Activated CD4-positive, alpha-beta memory T cell treated with anti-CD3 and anti-CD28 coated beads for 36 hours (primary cell): ENCODE measurements at regions of chr2 and their contacts with region 1.

Region 1: DNA sequence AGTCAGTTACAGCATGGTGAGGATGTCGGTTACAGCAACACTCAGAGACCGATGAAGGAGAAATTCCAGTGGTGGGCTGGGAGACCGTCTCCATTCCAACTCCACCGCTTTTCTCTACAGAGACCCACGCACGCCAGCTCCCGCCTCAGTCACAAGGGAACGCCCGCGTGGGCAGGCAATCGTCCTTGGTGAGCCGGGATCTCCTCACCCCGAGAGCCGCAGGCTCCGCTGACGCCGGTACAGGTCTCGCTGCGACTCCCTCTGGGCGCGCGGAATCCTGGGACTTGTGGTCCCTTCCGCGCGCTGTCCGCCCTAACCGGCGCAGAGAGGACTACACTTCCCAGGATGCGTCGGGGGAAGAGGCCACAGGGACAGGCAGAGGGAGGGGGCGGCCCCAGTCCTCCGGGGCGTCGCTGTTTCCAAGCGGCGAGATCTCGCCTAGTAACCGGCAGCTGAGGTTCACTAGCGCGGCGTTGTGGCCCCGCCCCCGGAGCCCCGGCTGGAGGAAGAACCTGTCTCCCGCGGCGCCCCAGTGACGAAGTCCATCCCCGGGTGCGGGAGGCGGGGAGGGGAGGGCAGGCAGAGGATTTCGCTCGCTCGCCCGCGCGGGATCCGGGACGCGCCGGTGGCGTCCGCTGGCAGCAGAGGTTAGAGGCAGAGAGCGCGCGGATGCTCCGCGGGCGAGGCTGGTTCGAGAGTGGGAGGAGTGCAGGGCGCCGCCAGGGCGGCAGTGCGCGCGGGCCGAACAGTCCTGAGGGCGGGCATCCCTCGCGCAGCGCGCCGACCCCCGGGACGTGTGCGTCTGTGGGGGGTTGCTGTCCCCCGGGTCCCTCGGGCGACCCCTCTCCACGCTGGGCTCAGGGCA is at the start of gene EML6:
- DNase-seq: peak; percentile 99
- H3K4me3 Mint-ChIP-seq: peak within 1 kb of the TSS; percentile 85
- H3K27ac Mint-ChIP-seq: peak within 1 kb of the TSS; percentile 34
- H3K4me1 Mint-ChIP-seq: peaks cover 12% of the 10 kb centered on the region
- H3K27me3 Mint-ChIP-seq: peaks cover 31% of the 10 kb centered on the region
- total RNA-seq, gene EML6: 0.46 to 0.50 TPM

Region 2: GRCh38 chr2:53767405-53768241 is 955.7 kb before region 1 on chr2 and contains the start of gene CHAC2:
- CTCF ChIA-PET with region 1: no interaction called
- POLR2A ChIA-PET with region 1: no interaction called
- intact Hi-C with region 1: loop called (anchors 10 kb)
- DNase-seq: peak; percentile 91
- H3K4me3 Mint-ChIP-seq: peak within 1 kb of the TSS; percentile 93
- H3K27ac Mint-ChIP-seq: peak within 1 kb of the TSS; percentile 97
- H3K4me1 Mint-ChIP-seq: peaks cover 27% of the 10 kb centered on the region
- H3K27me3 Mint-ChIP-seq: no peaks in the 10 kb centered on the region
- total RNA-seq, gene CHAC2: 13.2 to 15.0 TPM

Region 3: DNA sequence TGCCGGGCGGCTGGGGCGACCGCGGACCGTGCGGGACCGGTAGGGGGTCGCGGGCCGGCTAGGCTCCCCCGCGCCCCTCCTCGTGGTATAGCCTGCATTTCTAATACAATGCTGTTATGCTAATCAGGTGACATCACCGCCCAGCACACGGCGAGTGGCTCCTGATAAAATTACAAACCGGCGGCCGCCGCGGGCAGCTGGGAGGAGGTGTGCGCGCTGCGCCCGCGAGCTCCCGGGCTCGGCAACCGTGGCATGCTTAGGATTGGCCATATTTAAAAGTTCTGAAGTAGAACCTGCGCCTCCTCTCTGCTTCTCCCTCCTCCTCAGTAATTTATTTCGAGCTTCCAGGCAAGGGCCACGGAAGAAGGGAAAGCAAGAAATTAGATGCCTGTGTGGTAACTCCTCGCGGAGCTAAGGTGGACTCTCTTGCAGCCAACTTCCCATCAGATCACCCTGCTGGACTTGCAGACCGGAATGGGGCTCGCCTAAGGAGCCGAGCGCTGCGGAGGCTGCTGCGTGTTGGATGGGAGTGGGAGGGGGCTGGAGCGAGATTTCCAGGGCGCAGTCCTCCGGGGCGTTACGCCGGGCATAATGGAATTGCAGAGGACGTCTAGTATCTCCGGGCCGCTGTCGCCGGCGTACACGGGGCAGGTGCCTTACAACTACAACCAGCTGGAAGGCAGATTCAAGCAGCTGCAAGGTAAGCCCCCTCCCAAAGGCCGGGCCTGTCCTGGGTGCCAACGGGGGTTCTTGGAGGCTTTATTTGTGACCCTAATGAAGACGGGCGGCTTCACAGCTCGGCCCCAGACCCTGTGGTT is 165.0 kb before region 1 on chr2:
- CTCF ChIA-PET with region 1: no interaction called
- POLR2A ChIA-PET with region 1: interaction called, 4 read pairs
- intact Hi-C with region 1: loop called (anchors 1 kb)
- DNase-seq: peak; percentile 85
- H3K4me3 Mint-ChIP-seq: peak overlapping the region; percentile 83
- H3K27ac Mint-ChIP-seq: peak overlapping the region; percentile 89
- H3K4me1 Mint-ChIP-seq: peaks cover 42% of the 10 kb centered on the region
- H3K27me3 Mint-ChIP-seq: no peaks in the 10 kb centered on the region

Region 4: GRCh38 chr2:54680397-54681041 is 42.8 kb before region 1 on chr2:
- CTCF ChIA-PET with region 1: no interaction called
- POLR2A ChIA-PET with region 1: interaction called, 3 read pairs
- intact Hi-C with region 1: loop called (anchors 1 kb)
- DNase-seq: peak; percentile 65
- H3K4me3 Mint-ChIP-seq: peak overlapping the region; percentile 47
- H3K27ac Mint-ChIP-seq: no peak overlapping the region
- H3K4me1 Mint-ChIP-seq: peaks cover 21% of the 10 kb centered on the region
- H3K27me3 Mint-ChIP-seq: peaks cover 68% of the 10 kb centered on the region

Region 5: GRCh38 chr2:54838585-54839035 is 115.2 kb after region 1 on chr2:
- CTCF ChIA-PET with region 1: interaction called, 16 read pairs
- POLR2A ChIA-PET with region 1: no interaction called
- intact Hi-C with region 1: loop called (anchors 1 kb)
- DNase-seq: peak; percentile 73
- H3K4me3 Mint-ChIP-seq: no peak overlapping the region
- H3K27ac Mint-ChIP-seq: no peak overlapping the region
- H3K4me1 Mint-ChIP-seq: no peaks in the 10 kb centered on the region
- H3K27me3 Mint-ChIP-seq: no peaks in the 10 kb centered on the region

Region 6: DNA sequence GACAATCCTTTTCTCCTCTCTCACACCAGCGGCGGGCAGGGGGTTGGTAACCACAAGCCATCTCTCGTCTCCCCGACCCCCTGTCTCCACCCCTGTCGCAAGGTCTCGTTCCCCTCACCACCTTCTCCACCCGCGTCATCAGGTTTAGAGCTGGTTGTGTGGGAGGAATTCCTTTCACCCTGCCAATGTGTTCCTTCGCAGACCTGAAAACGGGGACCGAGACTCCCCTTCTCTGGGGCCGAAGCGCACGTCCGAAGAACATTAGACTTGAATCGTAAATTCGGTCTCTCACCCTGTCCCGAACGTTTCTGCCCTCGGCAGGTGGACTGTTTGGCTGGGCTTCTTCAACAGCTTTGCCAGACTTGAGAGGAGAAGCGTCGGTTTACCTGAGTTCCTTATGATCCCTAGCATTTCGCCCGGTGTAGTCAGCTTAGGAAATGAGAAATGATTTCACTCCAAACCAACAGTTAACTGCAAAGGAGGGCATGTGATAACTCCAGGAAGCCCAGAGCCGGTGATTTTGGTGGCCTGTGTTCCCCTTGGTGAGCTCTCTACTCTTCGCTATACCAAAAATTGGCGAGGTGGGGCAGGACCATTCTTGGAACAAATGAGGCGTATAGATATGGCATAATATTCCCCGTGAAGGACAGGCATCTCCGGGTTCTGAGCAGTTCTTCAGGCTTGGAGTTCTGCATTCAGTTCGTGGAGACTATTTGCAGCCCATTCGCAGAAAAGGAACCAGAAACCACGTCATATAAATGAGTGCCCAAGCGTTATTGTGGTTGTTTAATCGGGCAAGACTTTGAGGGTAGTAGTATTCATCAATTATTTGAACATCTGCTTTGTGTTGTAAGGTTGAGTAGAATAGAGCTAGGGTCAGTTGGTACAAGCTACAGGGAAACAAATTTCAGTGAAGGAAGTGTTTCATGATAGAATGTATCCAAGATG is 796.8 kb after region 1 on chr2:
- CTCF ChIA-PET with region 1: no interaction called
- POLR2A ChIA-PET with region 1: no interaction called
- intact Hi-C with region 1: loop called (anchors 5 kb)
- DNase-seq: peak; percentile 55
- H3K4me3 Mint-ChIP-seq: peak overlapping the region; percentile 99
- H3K27ac Mint-ChIP-seq: peak overlapping the region; percentile 95
- H3K4me1 Mint-ChIP-seq: peaks cover 9% of the 10 kb centered on the region
- H3K27me3 Mint-ChIP-seq: no peaks in the 10 kb centered on the region